Naive thymus-derived CD4-positive, alpha-beta T cell (primary cell): ENCODE measurements at regions of chr3 and their contacts with region 1.

Region 1: GRCh38 chr3:129316131-129317013 is 37.7 kb downstream of the HMCES start:
- DNase-seq: peak; percentile 80 to 96 (median 88)
- ATAC-seq: peak; percentile 75
- H3K4me3 ChIP-seq: peak overlapping the region; percentile 89
- H3K4me3 Mint-ChIP-seq: peak overlapping the region; percentile 70 to 97 (median 88)
- H3K27ac ChIP-seq: peak overlapping the region; percentile 88
- H3K27ac Mint-ChIP-seq: peak overlapping the region; percentile 80 to 94 (median 88)
- H3K4me1 ChIP-seq: peaks cover 5 to 10% of the 10 kb centered on the region in 2 donors
- H3K4me1 Mint-ChIP-seq: peaks cover 17 to 31% (median 24%) of the 10 kb centered on the region in 7 donors
- H3K27me3 ChIP-seq: no peaks in the 10 kb centered on the region
- H3K27me3 Mint-ChIP-seq: peaks cover 0 to 2% (median 0%) of the 10 kb centered on the region in 5 donors

Region 2: DNA sequence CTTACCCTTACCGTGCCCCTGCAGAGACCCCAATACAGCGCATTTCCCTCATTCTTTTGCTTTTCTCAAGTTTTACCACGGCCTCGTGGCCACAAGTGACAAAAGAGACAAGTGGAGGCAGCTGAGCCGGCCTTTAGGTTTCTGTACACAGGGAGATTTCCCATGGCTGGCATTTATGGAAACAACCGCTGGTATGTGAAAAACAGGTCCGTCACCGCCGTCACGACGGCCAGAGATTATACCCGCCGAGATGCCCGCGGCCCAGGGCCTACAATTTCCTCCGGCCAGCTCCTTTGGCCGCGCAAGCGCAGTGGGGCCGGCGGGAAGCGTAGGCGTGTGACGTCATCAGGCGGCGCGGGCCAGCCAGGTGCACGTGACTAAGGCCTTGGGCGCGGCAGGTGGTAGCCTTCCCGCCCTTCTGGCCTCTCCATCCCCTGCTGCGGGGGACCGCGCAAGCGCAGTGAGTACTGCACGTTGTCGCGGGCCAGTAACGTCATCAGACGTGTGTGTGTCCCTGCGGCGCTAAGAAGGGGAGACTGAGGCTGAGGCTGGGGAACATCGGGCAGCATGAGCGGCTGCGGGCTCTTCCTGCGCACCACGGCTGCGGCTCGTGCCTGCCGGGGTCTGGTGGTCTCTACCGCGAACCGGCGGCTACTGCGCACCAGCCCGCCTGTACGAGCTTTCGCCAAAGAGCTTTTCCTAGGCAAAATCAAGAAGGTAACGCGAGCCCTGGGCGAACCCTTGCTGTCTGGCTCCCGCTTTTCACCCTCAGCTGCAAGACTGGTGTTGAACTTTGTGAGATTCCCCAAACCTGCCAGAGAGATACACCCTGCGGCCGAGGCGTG is 437.0 kb before region 1 on chr3 and contains the start of gene ACAD9:
- CTCF ChIA-PET with region 1: no interaction called
- POLR2A ChIA-PET with region 1: interaction called, 9 read pairs
- intact Hi-C with region 1: loop called (anchors 1 to 2 kb)
- DNase-seq: peak; percentile 94 to 100 (median 96)
- ATAC-seq: peak; percentile 95
- H3K4me3 ChIP-seq: peak within 1 kb of the TSS; percentile 74
- H3K4me3 Mint-ChIP-seq: peak within 1 kb of the TSS; percentile 80 to 98 (median 89)
- H3K27ac ChIP-seq: peak within 1 kb of the TSS; percentile 97
- H3K27ac Mint-ChIP-seq: peak within 1 kb of the TSS; percentile 92 to 98 (median 97)
- H3K4me1 ChIP-seq: peaks cover 19 to 43% of the 10 kb centered on the region in 2 donors
- H3K4me1 Mint-ChIP-seq: peaks cover 40 to 83% (median 77%) of the 10 kb centered on the region in 7 donors
- H3K27me3 ChIP-seq: no peaks in the 10 kb centered on the region
- H3K27me3 Mint-ChIP-seq: peaks cover 0 to 6% (median 0%) of the 10 kb centered on the region in 5 donors
- total RNA-seq, gene ACAD9: 40.3 to 74.0 (median 63.0) TPM

Region 3: DNA sequence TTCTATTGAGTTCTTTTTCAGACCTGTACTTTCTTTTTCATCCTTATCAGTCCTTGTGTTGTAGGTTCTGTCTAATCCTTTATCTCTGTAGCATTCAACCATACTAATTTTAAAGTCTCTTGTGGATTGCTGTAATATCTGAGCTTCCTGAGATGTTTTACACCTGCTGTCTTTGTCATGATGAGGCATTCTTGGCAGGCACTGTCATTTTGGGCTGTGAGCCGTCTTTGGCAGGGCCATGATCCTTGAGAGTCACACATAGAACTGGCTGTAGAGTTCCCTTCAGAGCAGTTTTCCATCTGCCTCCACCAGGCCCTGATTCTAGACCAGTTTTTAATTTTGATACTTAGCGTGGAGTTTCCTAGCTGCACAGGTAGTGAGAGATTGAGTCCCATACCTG is 308.6 kb before region 1 on chr3:
- CTCF ChIA-PET with region 1: no interaction called
- POLR2A ChIA-PET with region 1: no interaction called
- intact Hi-C with region 1: no loop called
- DNase-seq: no peak
- ATAC-seq: no peak
- H3K4me3 ChIP-seq: no peak overlapping the region
- H3K4me3 Mint-ChIP-seq: no peak overlapping the region
- H3K27ac ChIP-seq: no peak overlapping the region
- H3K27ac Mint-ChIP-seq: peak overlapping the region in 2 of 9 donors; percentile 4 to 20
- H3K4me1 ChIP-seq: peaks cover 0 to 15% of the 10 kb centered on the region in 2 donors
- H3K4me1 Mint-ChIP-seq: peaks cover 18 to 37% (median 31%) of the 10 kb centered on the region in 7 donors
- H3K27me3 ChIP-seq: peaks cover 2 to 3% of the 10 kb centered on the region in 2 donors
- H3K27me3 Mint-ChIP-seq: peaks cover 5 to 31% (median 7%) of the 10 kb centered on the region in 5 donors

Region 4: DNA sequence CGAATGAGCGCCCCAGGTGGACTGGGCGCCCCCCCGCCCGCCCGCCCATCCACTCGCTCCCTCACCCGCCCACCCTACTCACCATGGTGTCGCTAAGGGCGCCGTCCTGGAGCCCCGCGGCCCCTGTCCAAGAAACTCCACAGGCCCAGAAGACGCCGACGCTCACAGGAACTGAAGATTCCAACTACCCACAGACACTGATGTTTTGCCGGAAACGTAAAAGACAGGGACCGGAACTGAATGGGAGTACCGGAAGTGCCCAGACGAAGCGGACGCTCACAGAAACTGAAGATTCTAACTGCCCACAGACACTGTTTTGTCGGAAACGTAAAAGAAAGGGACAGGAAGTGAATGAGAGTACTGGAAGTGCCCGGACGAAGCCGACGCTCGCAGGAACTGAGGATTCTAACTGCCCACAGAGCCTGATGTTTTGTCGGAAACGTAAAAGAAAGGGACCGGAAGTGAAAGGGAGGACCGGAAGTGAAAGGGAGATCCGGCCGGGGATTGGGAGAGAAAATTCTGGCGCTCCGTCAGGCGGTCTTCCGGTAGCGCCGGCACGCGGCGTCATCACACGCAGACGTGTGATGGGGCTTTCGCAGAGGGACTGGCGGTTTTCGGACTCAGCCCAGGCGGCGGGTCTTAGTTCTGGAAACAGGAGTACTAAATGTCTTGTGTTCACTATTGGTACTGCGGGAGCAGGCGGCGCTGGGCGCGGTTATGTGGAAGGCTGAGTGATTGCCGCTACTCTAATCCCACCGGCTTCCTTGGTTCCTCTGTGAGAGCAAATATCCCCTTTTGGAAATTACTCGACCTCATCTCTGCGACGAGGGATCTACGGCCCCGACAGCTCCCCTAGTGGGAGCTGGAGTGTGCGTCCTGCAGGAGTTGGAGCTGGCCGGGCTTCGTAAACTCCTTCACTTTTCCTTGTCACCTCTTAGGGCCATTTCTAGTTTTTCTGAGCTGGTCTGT is 155.2 kb before region 1 on chr3 and contains the start of gene ISY1:
- CTCF ChIA-PET with region 1: no interaction called
- POLR2A ChIA-PET with region 1: interaction called, 3 read pairs
- intact Hi-C with region 1: loop called in 1 of 2 experiments (anchors 1 kb)
- DNase-seq: peak; percentile 68 to 92 (median 89)
- ATAC-seq: peak; percentile 90
- H3K4me3 ChIP-seq: peak within 1 kb of the TSS; percentile 94
- H3K4me3 Mint-ChIP-seq: peak within 1 kb of the TSS; percentile 84 to 100 (median 98)
- H3K27ac ChIP-seq: peak within 1 kb of the TSS; percentile 98
- H3K27ac Mint-ChIP-seq: peak within 1 kb of the TSS; percentile 97 to 100 (median 99)
- H3K4me1 ChIP-seq: peaks cover 22 to 24% of the 10 kb centered on the region in 2 donors
- H3K4me1 Mint-ChIP-seq: peaks cover 18 to 53% (median 40%) of the 10 kb centered on the region in 7 donors
- H3K27me3 ChIP-seq: no peaks in the 10 kb centered on the region
- H3K27me3 Mint-ChIP-seq: peaks cover 0 to 4% (median 0%) of the 10 kb centered on the region in 5 donors
- total RNA-seq, gene ISY1: 27.6 to 65.1 (median 37.4) TPM

Region 5: DNA sequence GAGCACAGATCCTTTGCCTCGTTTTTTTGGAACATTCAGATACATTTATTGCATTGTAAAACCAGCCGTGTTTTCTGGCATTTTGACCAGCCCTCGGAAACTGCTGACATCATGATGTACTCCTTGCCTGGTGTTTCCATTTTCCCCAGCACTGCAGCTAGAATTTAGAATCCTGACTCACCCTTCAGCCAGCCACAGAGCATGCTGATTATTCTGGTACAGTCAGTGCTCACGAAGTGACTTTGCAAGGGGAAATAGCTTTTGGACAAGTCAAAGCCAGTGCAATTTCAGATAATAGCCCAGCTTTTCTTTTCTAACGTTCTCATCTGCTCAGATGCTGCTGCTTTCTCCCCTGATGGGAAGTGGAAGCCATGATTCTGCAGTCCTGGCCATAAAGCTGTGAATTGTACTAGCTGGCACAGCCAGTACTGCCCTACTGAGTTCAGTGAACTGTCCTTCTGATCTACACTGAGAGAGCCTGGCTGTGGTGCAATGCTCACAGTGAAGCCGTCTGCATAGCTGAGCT is 120.6 kb before region 1 on chr3:
- CTCF ChIA-PET with region 1: no interaction called
- POLR2A ChIA-PET with region 1: no interaction called
- intact Hi-C with region 1: no loop called
- DNase-seq: no peak
- ATAC-seq: peak; percentile 88
- H3K4me3 ChIP-seq: no peak overlapping the region
- H3K4me3 Mint-ChIP-seq: no peak overlapping the region
- H3K27ac ChIP-seq: no peak overlapping the region
- H3K27ac Mint-ChIP-seq: peak overlapping the region in 3 of 9 donors; percentile 36 to 72 (median 46)
- H3K4me1 ChIP-seq: no peaks in the 10 kb centered on the region
- H3K4me1 Mint-ChIP-seq: peaks cover 0 to 26% (median 0%) of the 10 kb centered on the region in 7 donors
- H3K27me3 ChIP-seq: no peaks in the 10 kb centered on the region
- H3K27me3 Mint-ChIP-seq: no peaks in the 10 kb centered on the region

Region 6: GRCh38 chr3:129271674-129272073 is 44.7 kb before region 1 on chr3:
- CTCF ChIA-PET with region 1: no interaction called
- POLR2A ChIA-PET with region 1: interaction called, 251 read pairs
- intact Hi-C with region 1: no loop called
- DNase-seq: no peak
- ATAC-seq: no peak
- H3K4me3 ChIP-seq: no peak overlapping the region
- H3K4me3 Mint-ChIP-seq: no peak overlapping the region
- H3K27ac ChIP-seq: no peak overlapping the region
- H3K27ac Mint-ChIP-seq: peak overlapping the region in 2 of 9 donors; percentile 15 to 23
- H3K4me1 ChIP-seq: no peaks in the 10 kb centered on the region
- H3K4me1 Mint-ChIP-seq: peaks cover 0 to 5% (median 0%) of the 10 kb centered on the region in 7 donors
- H3K27me3 ChIP-seq: no peaks in the 10 kb centered on the region
- H3K27me3 Mint-ChIP-seq: no peaks in the 10 kb centered on the region

Region 7: GRCh38 chr3:129305592-129306091 is 10.7 kb before region 1 on chr3:
- CTCF ChIA-PET with region 1: interaction called, 5 read pairs
- POLR2A ChIA-PET with region 1: interaction called, 111 read pairs
- intact Hi-C with region 1: no loop called
- DNase-seq: peak in 2 of 9 donors; percentile 33 to 56
- ATAC-seq: peak; percentile 66
- H3K4me3 ChIP-seq: no peak overlapping the region
- H3K4me3 Mint-ChIP-seq: peak overlapping the region in 5 of 10 donors; percentile 15 to 27 (median 21)
- H3K27ac ChIP-seq: peak overlapping the region; percentile 44
- H3K27ac Mint-ChIP-seq: peak overlapping the region in 7 of 9 donors; percentile 55 to 83 (median 65)
- H3K4me1 ChIP-seq: no peaks in the 10 kb centered on the region
- H3K4me1 Mint-ChIP-seq: peaks cover 17 to 38% (median 27%) of the 10 kb centered on the region in 7 donors
- H3K27me3 ChIP-seq: no peaks in the 10 kb centered on the region
- H3K27me3 Mint-ChIP-seq: no peaks in the 10 kb centered on the region

Region 8: GRCh38 chr3:129428376-129429079 is 112.2 kb after region 1 on chr3 and contains the start of gene EFCAB12:
- CTCF ChIA-PET with region 1: no interaction called
- POLR2A ChIA-PET with region 1: interaction called, 12 read pairs
- intact Hi-C with region 1: loop called in 1 of 2 experiments (anchors 1 kb)
- DNase-seq: peak; percentile 78 to 90 (median 86)
- ATAC-seq: peak; percentile 98
- H3K4me3 ChIP-seq: peak within 1 kb of the TSS; percentile 63
- H3K4me3 Mint-ChIP-seq: peak within 1 kb of the TSS; percentile 78 to 97 (median 89)
- H3K27ac ChIP-seq: peak within 1 kb of the TSS; percentile 65
- H3K27ac Mint-ChIP-seq: peak within 1 kb of the TSS; percentile 60 to 91 (median 75)
- H3K4me1 ChIP-seq: peaks cover 0 to 13% of the 10 kb centered on the region in 2 donors
- H3K4me1 Mint-ChIP-seq: peaks cover 17 to 29% (median 22%) of the 10 kb centered on the region in 7 donors
- H3K27me3 ChIP-seq: no peaks in the 10 kb centered on the region
- H3K27me3 Mint-ChIP-seq: peaks cover 0 to 13% (median 0%) of the 10 kb centered on the region in 5 donors
- total RNA-seq, gene EFCAB12: 1.5 to 2.7 (median 2.3) TPM

Region 9: GRCh38 chr3:129650256-129650872 is 334.0 kb after region 1 on chr3:
- CTCF ChIA-PET with region 1: no interaction called
- POLR2A ChIA-PET with region 1: no interaction called
- intact Hi-C with region 1: no loop called
- DNase-seq: peak in 8 of 9 donors; percentile 8 to 57 (median 42)
- ATAC-seq: peak; percentile 62
- H3K4me3 ChIP-seq: no peak overlapping the region
- H3K4me3 Mint-ChIP-seq: no peak overlapping the region
- H3K27ac ChIP-seq: no peak overlapping the region
- H3K27ac Mint-ChIP-seq: peak overlapping the region in 2 of 9 donors; percentile 12 to 38
- H3K4me1 ChIP-seq: no peaks in the 10 kb centered on the region
- H3K4me1 Mint-ChIP-seq: peaks cover 0 to 4% (median 1%) of the 10 kb centered on the region in 7 donors
- H3K27me3 ChIP-seq: no peaks in the 10 kb centered on the region
- H3K27me3 Mint-ChIP-seq: peaks cover 0 to 4% (median 0%) of the 10 kb centered on the region in 5 donors

Region 10: DNA sequence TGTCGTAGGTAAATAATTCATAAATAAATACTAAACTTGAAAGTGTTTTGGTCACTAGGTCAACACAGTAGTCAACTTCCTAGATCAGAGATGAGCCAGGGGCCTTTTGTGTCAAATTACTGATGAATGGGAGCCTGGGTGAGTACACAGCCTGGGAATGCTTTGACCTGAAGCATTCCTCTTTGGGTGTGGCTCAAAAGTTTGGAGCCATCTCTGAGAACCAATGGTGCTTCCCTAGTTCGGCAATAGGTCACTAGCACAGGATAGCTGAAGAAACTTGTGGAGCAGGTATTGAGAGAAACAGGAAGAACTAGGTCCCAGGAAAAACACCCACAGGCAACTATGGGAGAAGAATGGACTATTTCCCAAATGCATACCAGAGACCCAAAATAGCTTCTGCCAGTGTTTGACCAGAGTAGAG is 346.7 kb after region 1 on chr3:
- CTCF ChIA-PET with region 1: no interaction called
- POLR2A ChIA-PET with region 1: no interaction called
- intact Hi-C with region 1: no loop called
- DNase-seq: no peak
- ATAC-seq: no peak
- H3K4me3 ChIP-seq: no peak overlapping the region
- H3K4me3 Mint-ChIP-seq: no peak overlapping the region
- H3K27ac ChIP-seq: no peak overlapping the region
- H3K27ac Mint-ChIP-seq: peak overlapping the region in 1 of 9 donors; percentile 12
- H3K4me1 ChIP-seq: no peaks in the 10 kb centered on the region
- H3K4me1 Mint-ChIP-seq: peaks cover 6 to 29% (median 17%) of the 10 kb centered on the region in 7 donors
- H3K27me3 ChIP-seq: no peaks in the 10 kb centered on the region
- H3K27me3 Mint-ChIP-seq: no peaks in the 10 kb centered on the region